ENCODE measurements at regions of chr19 and their contacts with region 1.

Region 1: GRCh38 chr19:55809381-55810058 is 22.3 kb downstream of the NLRP11 start:
- DNase-seq: no peak
- ATAC-seq: peak; percentile 94
- H3K4me3 ChIP-seq: no peak overlapping the region
- H3K27ac ChIP-seq: no peak overlapping the region
- H3K4me1 ChIP-seq: no peaks in the 10 kb centered on the region
- H3K27me3 ChIP-seq: no peaks in the 10 kb centered on the region
- CTCF ChIP-seq: peak; percentile 49 to 58 (median 53); a peak in 5 of 6 replicates
- EP300 ChIP-seq: no peak
- POLR2A ChIP-seq: no peak
- RAD21 ChIP-seq: peak; percentile 52

Region 2: DNA sequence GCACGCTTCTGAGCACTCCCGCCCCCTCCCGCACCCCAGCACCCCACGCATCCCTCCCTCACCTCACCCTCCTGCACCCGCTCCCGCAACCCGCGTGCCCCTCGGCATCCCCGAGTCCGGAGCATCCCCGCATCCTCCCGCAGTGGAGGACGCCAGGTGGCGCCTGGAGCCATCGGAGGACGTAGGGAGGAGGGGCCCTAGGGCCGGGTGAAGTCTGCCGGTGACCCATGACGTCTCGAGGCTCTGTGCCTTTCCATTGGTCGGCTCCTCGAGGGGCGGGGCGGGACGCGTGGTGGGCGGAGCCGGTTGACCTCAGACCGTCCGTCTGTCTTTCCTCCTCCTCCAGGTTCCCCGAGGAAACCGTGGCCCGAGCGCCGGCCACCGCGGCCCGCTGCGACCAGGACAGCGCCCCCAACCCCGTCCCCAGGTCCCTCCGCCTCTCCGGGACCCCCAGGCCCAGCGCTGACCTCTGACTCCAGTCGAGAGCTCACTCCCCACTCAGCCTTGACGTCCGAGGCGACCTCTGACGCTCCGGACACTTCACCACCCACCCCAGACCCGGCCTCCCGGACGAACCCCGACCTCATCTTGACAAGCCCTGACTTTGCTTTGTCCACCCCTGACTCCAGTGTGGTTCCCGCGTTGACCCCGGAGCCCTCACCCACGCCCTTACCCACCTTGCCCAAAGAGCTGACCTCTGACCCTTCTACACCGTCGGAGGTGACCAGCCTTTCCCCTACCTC is 292.5 kb before region 1 on chr19:
- CTCF ChIA-PET with region 1: no interaction called
- POLR2A ChIA-PET with region 1: no interaction called
- RAD21 ChIA-PET with region 1: no interaction called
- SMC1A ChIA-PET with region 1: no interaction called
- in situ Hi-C with region 1: loop called (anchors 10 kb)
- intact Hi-C with region 1: no loop called
- DNase-seq: peak; percentile 66
- ATAC-seq: peak; percentile 100
- H3K4me3 ChIP-seq: peak overlapping the region; percentile 66; the same call in 1 of the 2 replicates
- H3K27ac ChIP-seq: peak overlapping the region; percentile 62
- H3K4me1 ChIP-seq: 0 out of 2 replicates have a peak, but pooled peaks cover 4% of the 10 kb centered on the region
- H3K27me3 ChIP-seq: no peaks in the 10 kb centered on the region
- CTCF ChIP-seq: peak; percentile 80 to 97 (median 96); a peak in 5 of 6 replicates
- EP300 ChIP-seq: peak in 1 of 2 experiments; percentile 16; a peak in 1 of 4 replicates
- POLR2A ChIP-seq: peak; percentile 53; the same call in 1 of the 2 replicates
- RAD21 ChIP-seq: peak; percentile 96

Region 3: DNA sequence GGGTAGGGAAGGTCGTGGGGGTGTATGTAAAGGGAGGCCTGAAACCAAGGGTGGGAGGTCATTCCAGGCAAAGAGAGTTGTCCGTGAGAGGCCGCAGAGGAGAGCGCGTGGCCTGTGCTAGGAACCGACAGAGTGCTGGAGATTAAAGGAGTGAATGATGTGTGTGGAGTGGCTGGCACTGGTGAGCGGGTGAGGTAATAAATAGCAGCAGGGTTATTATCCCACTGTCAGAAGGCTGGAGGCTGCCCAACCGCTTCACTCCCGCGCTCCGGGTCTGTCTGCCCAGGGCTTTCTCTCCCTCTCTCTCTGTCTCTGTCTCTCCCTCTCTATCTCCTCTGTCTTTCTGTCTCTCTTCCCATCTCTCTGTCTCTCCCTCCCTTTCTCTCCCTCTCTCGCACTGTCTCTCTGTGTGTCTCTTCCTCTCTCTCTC is 246.2 kb before region 1 on chr19:
- CTCF ChIA-PET with region 1: no interaction called
- POLR2A ChIA-PET with region 1: no interaction called
- RAD21 ChIA-PET with region 1: no interaction called
- SMC1A ChIA-PET with region 1: no interaction called
- in situ Hi-C with region 1: no loop called
- intact Hi-C with region 1: no loop called
- DNase-seq: no peak
- ATAC-seq: no peak
- H3K4me3 ChIP-seq: no peak overlapping the region
- H3K27ac ChIP-seq: no peak overlapping the region
- H3K4me1 ChIP-seq: no peaks in the 10 kb centered on the region
- H3K27me3 ChIP-seq: no peaks in the 10 kb centered on the region
- CTCF ChIP-seq: no peak
- EP300 ChIP-seq: no peak
- POLR2A ChIP-seq: no peak
- RAD21 ChIP-seq: no peak

Region 4: DNA sequence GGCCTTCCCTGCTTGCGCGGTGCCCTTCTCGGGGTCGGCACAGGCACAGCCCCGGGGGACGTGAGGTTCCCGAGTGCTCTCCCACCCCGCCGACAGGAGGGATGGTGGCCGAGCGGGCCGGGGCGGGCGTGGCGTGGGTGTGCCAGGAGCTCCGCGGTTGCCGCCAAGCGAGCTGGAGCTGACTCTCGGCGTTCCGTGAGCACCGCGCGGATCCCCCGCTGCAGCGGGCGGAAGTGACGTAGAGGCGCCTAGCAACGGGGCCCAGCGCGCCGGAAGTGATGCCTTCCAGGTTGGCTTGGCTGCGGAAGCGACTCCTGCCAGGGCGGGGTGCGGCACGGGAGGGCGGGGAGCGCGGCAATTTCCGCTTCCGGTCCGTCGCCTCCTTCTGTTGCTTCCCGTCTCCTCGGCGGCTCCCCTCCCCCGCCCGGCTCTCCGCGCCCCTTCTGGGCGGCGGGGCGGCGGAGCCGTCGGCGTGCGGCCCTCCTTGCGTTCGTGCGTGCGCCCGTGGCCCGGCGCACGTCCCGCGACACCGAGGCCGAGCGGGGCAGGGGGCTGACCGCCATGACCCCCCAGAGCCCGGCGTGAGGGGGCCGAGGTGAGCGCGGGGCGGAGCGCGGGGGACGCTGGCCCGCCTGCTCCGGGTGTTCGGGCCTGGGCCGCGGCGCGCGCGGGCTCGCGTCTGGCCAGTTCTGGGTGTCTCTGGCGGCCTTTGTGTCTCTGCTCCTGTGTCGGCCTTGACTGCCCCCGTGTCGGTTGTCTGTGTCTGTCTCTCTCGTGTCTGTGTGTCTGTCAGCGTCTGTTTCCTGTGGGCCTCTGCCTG is 134.5 kb before region 1 on chr19 and contains the start of gene EPN1:
- CTCF ChIA-PET with region 1: interaction called, 5 read pairs
- POLR2A ChIA-PET with region 1: no interaction called
- RAD21 ChIA-PET with region 1: no interaction called
- SMC1A ChIA-PET with region 1: interaction called, 3 read pairs
- in situ Hi-C with region 1: loop called (anchors 5 kb)
- intact Hi-C with region 1: loop called (anchors 1 kb)
- DNase-seq: peak; percentile 74
- ATAC-seq: peak; percentile 64
- H3K4me3 ChIP-seq: peak within 1 kb of the TSS; percentile 92
- H3K27ac ChIP-seq: peak within 1 kb of the TSS; percentile 94
- H3K4me1 ChIP-seq: peaks cover 23% of the 10 kb centered on the region
- H3K27me3 ChIP-seq: no peaks in the 10 kb centered on the region
- CTCF ChIP-seq: no peak
- EP300 ChIP-seq: no peak
- POLR2A ChIP-seq: peak; percentile 72
- RAD21 ChIP-seq: no peak
- polyA plus RNA-seq, gene EPN1: 0.11 to 0.16 TPM

Region 5: DNA sequence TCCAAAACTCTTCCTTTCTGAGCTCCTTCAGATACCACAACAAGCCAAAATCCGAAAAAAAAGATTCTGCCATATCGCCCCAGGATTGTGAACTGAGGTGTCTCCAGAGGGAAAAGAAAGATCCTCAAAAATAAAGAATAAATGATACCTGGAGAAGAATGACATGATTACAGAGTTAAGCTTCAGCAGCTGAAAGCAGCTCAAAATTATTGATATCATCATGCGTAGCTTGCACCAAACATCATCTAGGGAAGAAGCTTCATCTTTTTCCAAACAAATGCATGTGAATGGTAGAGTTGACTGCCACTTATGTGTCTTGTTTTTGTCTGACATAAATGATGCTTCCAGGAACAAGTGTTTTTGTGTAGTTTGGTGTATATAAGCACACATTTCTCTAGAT is 71.2 kb before region 1 on chr19 and contains the start of gene NLRP9:
- CTCF ChIA-PET with region 1: no interaction called
- POLR2A ChIA-PET with region 1: no interaction called
- RAD21 ChIA-PET with region 1: no interaction called
- SMC1A ChIA-PET with region 1: no interaction called
- in situ Hi-C with region 1: no loop called
- intact Hi-C with region 1: no loop called
- DNase-seq: no peak
- ATAC-seq: no peak
- H3K4me3 ChIP-seq: no peak within 1 kb of the TSS
- H3K27ac ChIP-seq: no peak within 1 kb of the TSS
- H3K4me1 ChIP-seq: no peaks in the 10 kb centered on the region
- H3K27me3 ChIP-seq: no peaks in the 10 kb centered on the region
- CTCF ChIP-seq: no peak
- EP300 ChIP-seq: no peak
- POLR2A ChIP-seq: no peak
- RAD21 ChIP-seq: no peak
- polyA plus RNA-seq, gene NLRP9: not detected

Measured in GM12878 (cell line).